Activated CD4-positive, alpha-beta memory T cell treated with anti-CD3 and anti-CD28 coated beads, Interleukin-2, amount 10 ng/mL, durations not matched to agents 7 days and 5 days (primary cell): ENCODE measurements at regions of chr2 and their contacts with region 1.

Region 1: DNA sequence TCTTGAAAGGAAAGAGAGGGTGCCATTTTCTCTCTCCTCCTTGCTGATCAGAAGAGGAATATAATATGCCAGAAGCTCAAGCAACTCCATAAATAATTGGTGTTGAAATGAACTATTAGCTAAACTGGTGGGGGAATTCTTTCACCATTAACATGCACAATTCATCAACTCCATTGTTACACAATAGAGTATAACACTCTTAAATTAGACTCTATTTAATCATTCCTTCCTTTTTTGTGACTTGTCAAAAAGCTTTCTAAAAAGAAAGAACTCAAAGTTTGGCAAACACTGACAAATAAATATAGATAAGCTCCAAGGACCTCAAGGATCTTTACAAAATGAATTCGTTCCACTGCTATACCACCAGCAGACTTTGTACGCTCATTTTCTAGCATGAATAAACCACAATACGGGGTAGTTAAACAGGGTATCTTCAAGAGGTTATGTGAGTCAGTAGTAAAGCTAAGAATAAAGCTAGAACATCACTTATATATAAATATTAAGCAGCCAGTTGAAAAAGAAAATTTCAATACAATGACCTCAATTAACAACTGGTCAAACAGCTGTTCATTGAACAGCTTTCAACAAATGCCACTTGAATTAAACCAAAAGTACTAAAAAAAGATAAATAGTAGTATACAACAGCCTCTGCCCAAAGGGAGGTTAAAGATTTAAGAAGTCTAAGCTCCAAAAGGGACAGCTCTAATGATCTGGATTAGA is 6.4 kb downstream of the TRAK2 start:
- DNase-seq: no peak
- H3K4me3 Mint-ChIP-seq: no peak overlapping the region
- H3K27ac Mint-ChIP-seq: no peak overlapping the region
- H3K4me1 Mint-ChIP-seq: peaks cover 44% of the 10 kb centered on the region
- H3K27me3 Mint-ChIP-seq: no peaks in the 10 kb centered on the region

Region 2: DNA sequence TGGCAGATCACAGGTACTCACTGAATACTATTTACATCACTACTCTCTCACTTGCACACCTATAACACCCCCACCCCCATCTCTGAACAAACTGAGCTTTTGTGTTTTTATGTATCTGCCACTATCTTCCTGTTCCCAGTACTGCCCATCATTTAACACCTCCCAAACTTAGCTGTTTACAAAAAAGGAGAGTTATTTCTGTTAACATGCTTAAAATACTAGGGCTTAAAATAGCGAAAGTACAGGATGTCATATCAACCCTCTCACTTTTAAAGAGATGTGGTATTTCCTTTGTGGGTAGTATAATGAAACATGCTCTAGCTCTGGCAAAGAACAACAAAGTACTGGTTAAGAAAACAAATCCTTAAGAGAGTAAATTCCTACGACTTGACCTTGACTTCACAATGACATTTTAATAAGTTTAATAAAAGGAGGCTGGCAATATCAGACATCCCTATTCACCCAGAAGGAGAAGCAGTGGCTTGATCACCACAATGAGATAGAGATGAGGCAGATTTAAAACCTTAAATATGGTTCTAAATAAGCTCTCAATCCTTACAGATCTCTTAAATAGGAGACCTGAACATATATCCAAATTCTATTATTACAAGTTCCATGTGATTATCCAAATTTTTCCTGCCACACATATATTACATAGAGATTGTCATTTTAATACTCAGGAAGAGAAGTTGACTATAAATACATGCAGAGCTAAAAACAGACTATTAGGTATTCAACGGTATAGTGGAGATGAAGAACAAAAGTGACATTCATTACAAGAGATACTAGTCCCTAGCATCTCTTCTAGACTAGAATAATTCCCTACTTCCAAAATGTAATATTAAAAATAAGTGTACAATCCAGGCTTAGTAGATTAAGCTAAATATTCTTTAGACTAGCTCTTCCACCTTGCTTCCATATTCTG is 30.5 kb before region 1 on chr2:
- CTCF ChIA-PET with region 1: interaction called, 3 read pairs
- POLR2A ChIA-PET with region 1: interaction called, 13 read pairs
- DNase-seq: no peak
- H3K4me3 Mint-ChIP-seq: no peak overlapping the region
- H3K27ac Mint-ChIP-seq: no peak overlapping the region
- H3K4me1 Mint-ChIP-seq: peaks cover 8% of the 10 kb centered on the region
- H3K27me3 Mint-ChIP-seq: no peaks in the 10 kb centered on the region

Region 3: DNA sequence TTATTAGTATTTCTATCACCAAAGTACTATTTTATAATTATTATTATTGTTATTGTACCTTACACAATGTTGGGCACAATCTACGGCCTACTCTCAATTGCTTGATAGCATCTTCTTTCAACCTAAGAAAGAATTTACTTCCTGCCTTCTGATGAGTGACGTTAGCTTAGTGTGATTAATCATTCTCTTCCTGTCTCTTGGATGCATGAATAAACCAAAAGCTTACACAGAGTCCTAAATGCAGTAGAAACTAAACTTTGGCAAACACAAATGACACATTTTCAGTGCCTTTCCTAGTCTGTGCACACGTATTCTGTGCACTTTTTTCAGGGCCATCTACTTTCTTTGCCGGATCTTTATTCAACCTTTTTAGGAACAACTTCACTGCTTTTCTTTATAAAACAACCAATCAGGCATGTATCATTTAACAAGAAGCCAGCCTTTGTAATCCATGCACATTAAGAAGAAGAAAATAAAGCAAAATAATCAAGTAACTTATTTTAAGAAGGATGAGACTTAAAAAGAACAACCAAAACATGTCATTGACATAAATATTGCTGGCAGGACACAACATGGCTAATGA is 12.8 kb before region 1 on chr2:
- CTCF ChIA-PET with region 1: interaction called, 7 read pairs
- POLR2A ChIA-PET with region 1: interaction called, 48 read pairs
- DNase-seq: no peak
- H3K4me3 Mint-ChIP-seq: peak overlapping the region; percentile 23
- H3K27ac Mint-ChIP-seq: peak overlapping the region; percentile 88
- H3K4me1 Mint-ChIP-seq: peaks cover 40% of the 10 kb centered on the region
- H3K27me3 Mint-ChIP-seq: no peaks in the 10 kb centered on the region